Activated CD4-positive, alpha-beta memory T cell treated with anti-CD3 and anti-CD28 coated beads for 36 hours (primary cell): ENCODE measurements at regions of chr15 and their contacts with region 1.

Region 1: DNA sequence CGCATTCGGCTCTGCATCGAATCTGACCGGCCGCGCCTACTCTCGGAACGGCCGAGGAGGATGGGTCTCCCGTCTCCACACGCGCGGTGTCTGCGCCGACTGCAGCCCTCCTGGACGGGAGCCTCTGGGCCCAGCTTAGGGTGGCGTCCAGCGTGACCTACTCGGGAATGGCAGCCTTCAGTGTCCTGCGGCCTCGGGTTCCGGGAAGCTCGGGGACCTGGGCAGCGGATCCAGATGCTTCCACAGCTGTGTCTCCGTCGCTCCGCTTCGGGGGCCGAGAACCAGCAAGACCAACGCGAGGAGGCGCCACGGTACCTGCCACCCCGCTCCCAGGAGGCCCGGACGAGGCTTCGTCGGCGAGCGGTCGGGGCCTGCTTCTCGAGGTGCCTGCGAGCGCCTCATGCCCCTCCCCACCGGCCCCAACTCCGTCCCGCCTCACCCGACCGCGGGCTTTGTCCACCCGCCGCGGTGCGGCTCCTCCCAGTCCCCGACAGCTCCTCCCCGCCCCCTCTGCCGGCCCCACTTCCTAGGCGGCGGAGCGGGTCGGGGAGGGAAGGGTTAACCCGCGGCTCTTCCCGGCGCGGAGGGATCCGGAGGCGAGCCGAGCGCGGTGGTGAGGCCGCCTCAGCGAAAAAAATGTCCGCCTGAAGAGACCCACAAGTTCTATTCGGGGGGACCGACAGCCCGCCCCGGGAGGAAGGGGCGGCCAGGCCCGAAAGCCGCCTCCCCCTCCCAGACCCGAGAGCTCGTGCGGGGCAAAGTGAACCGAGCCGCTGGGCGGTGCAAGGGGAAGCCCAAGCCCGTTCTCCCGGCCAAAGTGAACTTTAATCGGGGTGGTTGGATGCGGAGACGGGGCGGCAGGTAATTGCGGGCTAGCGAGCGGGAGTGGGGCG is at the start of gene TCF12:
- DNase-seq: peak; percentile 94
- H3K4me3 Mint-ChIP-seq: peak within 1 kb of the TSS; percentile 81
- H3K27ac Mint-ChIP-seq: peak within 1 kb of the TSS; percentile 82
- H3K4me1 Mint-ChIP-seq: peaks cover 30% of the 10 kb centered on the region
- H3K27me3 Mint-ChIP-seq: no peaks in the 10 kb centered on the region
- total RNA-seq, gene TCF12: 63.7 to 64.6 TPM

Region 2: DNA sequence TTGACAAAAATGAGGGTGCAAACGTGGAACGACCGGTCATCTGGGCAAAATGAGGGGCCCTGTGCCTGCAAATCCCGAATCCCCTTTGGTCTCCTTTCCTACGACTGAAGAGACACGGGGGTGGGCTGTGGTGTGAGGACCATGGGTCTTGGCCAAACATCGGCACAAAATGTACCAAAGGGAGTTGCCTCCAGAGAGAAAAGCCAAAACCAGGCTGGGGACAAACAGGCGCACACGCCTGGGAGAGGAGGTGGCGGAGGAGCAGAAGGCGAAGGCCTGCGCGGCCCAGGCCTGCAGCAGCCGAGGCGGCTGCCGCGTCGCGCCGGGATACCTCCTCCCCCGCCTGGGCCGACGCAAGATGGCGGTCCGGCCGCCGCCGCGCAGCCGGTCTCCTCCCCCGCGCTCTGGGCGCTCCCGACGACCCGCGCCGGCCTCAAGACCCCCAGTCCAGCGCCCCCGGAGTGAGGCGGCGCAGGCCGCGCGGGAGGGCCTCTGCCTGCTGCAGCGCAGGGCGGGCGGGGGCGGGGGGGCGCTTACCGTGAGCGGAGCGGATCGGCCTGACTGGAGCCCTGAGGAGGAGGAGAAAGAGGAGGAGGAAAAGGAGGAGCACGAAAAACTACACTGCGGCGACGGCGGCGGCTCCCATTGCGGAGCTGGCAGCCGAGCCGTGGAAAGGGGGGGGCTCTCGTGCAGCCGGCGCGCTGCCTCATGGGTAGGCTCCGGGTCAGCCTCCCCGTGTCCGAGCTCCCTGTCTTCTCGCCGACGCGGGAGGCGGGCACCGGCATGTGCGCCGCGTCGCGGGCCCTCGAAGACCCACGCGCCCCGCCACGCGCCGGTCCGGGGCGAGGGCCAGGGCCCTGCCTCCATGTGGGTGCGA is 185.1 kb before region 1 on chr15 and contains the start of gene ZNF280D:
- CTCF ChIA-PET with region 1: no interaction called
- POLR2A ChIA-PET with region 1: interaction called, 9 read pairs
- intact Hi-C with region 1: loop called (anchors 2 kb)
- DNase-seq: peak; percentile 85
- H3K4me3 Mint-ChIP-seq: peak within 1 kb of the TSS; percentile 93
- H3K27ac Mint-ChIP-seq: peak within 1 kb of the TSS; percentile 93
- H3K4me1 Mint-ChIP-seq: peaks cover 32% of the 10 kb centered on the region
- H3K27me3 Mint-ChIP-seq: no peaks in the 10 kb centered on the region
- total RNA-seq, gene ZNF280D: 18.0 to 19.3 TPM

Region 3: GRCh38 chr15:56770173-56770572 is 148.1 kb before region 1 on chr15:
- CTCF ChIA-PET with region 1: no interaction called
- POLR2A ChIA-PET with region 1: no interaction called
- intact Hi-C with region 1: no loop called
- DNase-seq: no peak
- H3K4me3 Mint-ChIP-seq: no peak overlapping the region
- H3K27ac Mint-ChIP-seq: no peak overlapping the region
- H3K4me1 Mint-ChIP-seq: peaks cover 20% of the 10 kb centered on the region
- H3K27me3 Mint-ChIP-seq: peaks cover 8% of the 10 kb centered on the region

Region 4: DNA sequence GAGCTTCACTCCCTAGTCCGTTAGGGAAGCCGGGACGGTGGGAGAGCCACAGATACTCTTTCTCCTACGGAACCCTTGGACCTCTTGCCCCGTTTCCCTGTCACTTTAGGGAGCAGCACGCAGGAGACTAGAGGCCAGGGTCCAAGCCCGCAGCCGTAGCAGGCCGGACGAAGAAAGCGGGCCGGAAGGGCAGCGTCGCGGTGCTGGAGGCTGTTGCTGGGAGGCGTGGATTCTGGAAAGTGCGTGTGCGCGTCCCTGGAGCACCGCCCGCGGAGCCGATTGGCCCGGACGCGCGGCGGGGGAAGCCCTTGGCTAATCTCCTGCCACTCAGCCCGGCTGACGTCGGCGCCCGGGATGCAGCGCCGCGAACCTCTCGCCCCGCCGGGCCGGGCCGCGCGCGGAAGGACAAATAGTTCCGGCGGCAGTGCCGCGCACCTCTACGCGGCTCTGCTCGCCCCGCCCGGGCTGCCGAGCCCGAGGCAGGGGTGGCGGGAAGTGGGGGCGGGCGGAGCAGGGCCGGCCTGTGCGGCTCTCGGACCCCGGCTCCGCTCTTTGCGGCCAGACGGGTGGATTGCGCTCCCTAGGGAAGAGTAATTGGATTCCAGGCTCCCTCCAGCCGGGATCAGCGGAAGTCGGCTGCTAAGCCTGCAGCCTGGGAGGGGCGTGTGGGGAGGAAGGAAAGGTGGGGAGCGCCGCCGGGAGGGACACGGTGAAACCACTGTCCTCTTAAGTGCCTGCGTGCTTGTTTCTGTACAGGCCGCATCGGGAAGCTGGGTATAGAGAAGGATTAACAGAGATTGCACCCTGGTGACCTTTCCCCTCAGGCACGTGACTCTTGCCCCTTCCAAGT is 31.1 kb before region 1 on chr15:
- CTCF ChIA-PET with region 1: interaction called, 9 read pairs
- POLR2A ChIA-PET with region 1: interaction called, 28 read pairs
- intact Hi-C with region 1: loop called (anchors 1 kb)
- DNase-seq: peak; percentile 87
- H3K4me3 Mint-ChIP-seq: peak overlapping the region; percentile 77
- H3K27ac Mint-ChIP-seq: peak overlapping the region; percentile 81
- H3K4me1 Mint-ChIP-seq: peaks cover 26% of the 10 kb centered on the region
- H3K27me3 Mint-ChIP-seq: no peaks in the 10 kb centered on the region

Region 5: GRCh38 chr15:56950979-56951378 is 32.7 kb after region 1 on chr15:
- CTCF ChIA-PET with region 1: no interaction called
- POLR2A ChIA-PET with region 1: no interaction called
- intact Hi-C with region 1: no loop called
- DNase-seq: no peak
- H3K4me3 Mint-ChIP-seq: no peak overlapping the region
- H3K27ac Mint-ChIP-seq: no peak overlapping the region
- H3K4me1 Mint-ChIP-seq: peaks cover 22% of the 10 kb centered on the region
- H3K27me3 Mint-ChIP-seq: no peaks in the 10 kb centered on the region

Region 6: GRCh38 chr15:56984681-56985481 is 66.6 kb after region 1 on chr15:
- CTCF ChIA-PET with region 1: no interaction called
- POLR2A ChIA-PET with region 1: interaction called, 3 read pairs
- intact Hi-C with region 1: loop called (anchors 5 kb)
- DNase-seq: no peak
- H3K4me3 Mint-ChIP-seq: no peak overlapping the region
- H3K27ac Mint-ChIP-seq: no peak overlapping the region
- H3K4me1 Mint-ChIP-seq: peaks cover 50% of the 10 kb centered on the region
- H3K27me3 Mint-ChIP-seq: no peaks in the 10 kb centered on the region

Region 7: DNA sequence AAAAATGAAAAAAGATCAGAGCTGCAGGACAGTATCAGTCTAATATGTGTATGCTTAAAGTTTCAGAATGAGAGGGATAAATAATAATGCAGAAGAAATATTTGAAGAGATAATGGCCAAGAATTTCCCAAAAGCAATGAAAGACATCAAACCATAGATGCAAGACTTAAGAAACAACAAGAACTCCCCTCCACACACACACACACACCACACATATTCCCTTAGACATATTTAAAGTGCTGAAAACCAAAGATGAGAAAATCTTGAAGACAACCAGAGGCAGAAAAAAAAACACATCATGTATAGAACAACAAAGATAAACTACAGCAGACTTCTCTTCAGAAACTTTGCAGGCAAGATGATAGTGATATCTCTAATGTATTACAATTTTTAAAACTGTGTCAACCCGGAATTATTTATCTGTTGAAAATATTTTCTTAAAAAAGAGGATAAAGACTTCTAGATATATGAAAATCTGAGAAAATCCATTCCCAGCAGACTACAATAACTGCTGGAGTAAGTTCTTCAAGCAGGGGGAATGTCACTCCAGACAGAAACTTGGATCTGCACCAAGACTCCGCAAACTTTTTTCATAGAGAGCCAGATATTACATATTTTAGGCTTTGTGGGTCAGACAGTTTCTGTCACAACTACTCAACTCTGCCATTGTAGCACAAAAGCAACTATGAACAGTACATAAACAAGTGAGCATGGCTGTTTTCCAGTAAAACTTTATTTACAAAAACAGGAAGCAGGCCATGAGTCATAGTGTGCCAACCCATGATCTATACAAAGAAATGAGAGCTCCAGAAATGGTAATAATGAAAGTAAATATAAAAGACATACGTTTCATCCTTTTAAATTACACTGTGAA is 234.6 kb after region 1 on chr15:
- CTCF ChIA-PET with region 1: interaction called, 7 read pairs
- POLR2A ChIA-PET with region 1: interaction called, 3 read pairs
- intact Hi-C with region 1: loop called (anchors 5 kb)
- DNase-seq: peak; percentile 29
- H3K4me3 Mint-ChIP-seq: no peak overlapping the region
- H3K27ac Mint-ChIP-seq: peak overlapping the region; percentile 16
- H3K4me1 Mint-ChIP-seq: peaks cover 21% of the 10 kb centered on the region
- H3K27me3 Mint-ChIP-seq: no peaks in the 10 kb centered on the region